ENCODE measurements at regions of chr5 and their contacts with region 1.

Region 1: GRCh38 chr5:174793684-174794328 is 69.4 kb downstream of the MSX2 start:
- DNase-seq: peak; percentile 62 to 83
- H3K4me3 ChIP-seq: no peak overlapping the region
- H3K27ac ChIP-seq: no peak overlapping the region
- H3K4me1 ChIP-seq: peaks cover 0 to 8% (median 6%) of the 10 kb centered on the region in 4 donors
- H3K27me3 ChIP-seq: peaks cover 0 to 57% (median 14%) of the 10 kb centered on the region in 3 donors
- CTCF ChIP-seq: peak in 5 of 7 experiments; percentile 34 to 73 (median 64)
- EP300 ChIP-seq: no peak
- POLR2A ChIP-seq: no peak

Region 2: DNA sequence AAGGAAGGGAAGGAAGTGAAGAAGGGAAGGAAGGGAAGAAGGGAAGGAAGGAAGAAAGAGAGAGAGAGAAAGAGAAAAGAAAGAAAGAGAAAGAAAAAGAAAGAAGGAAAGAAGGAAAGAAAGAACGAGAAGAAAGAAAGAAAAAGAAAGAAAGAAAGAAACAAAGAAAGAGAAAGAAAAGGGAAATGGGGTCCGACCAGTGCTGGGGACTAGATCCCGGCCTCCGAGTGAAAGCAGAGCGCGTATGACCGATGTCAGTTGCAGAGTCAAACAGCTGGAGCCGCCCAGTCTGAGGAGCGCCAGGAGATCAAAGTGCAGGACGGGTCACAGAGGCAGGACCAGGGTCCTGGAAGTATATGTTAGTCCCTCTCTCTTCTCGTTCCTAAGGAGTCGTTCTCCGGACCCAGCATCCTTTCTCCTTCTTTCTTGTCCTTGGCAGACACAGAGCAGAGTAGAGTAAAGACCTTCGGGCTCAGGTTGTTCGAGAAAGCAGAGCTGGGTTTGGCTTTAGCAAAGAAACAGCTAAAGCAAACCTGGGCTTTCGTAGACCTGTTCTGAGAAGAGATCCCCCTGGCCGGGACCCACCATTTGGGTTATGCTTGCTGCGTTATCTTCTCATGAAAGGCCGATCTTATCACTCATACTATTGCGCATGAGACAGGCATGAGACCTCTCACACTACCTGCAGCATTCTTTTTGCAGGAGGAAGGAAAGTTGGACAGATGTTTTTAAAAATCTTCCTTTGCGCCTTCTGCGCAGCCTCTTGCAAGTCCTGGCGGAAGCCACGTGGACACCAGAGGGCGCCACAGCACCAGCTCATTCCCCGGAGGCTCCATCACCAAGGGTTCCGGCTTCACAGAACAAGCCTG is 374.6 kb before region 1 on chr5:
- intact Hi-C with region 1: loop called (anchors 5 kb)
- DNase-seq: peak; percentile 93 to 97
- H3K4me3 ChIP-seq: peak overlapping the region in 1 of 4 donors; percentile 17
- H3K27ac ChIP-seq: no peak overlapping the region
- H3K4me1 ChIP-seq: peaks cover 3 to 11% (median 8%) of the 10 kb centered on the region in 4 donors
- H3K27me3 ChIP-seq: peaks cover 0 to 55% (median 4%) of the 10 kb centered on the region in 3 donors
- CTCF ChIP-seq: peak in 5 of 7 experiments; percentile 43 to 87 (median 80)
- EP300 ChIP-seq: no peak
- POLR2A ChIP-seq: no peak

Region 3: GRCh38 chr5:174693713-174694385 is 100.0 kb before region 1 on chr5:
- intact Hi-C with region 1: no loop called
- DNase-seq: peak; percentile 81
- H3K4me3 ChIP-seq: no peak overlapping the region
- H3K27ac ChIP-seq: no peak overlapping the region
- H3K4me1 ChIP-seq: peaks cover 0 to 24% (median 8%) of the 10 kb centered on the region in 4 donors
- H3K27me3 ChIP-seq: peaks cover 4 to 87% (median 54%) of the 10 kb centered on the region in 3 donors
- CTCF ChIP-seq: no peak
- EP300 ChIP-seq: no peak
- POLR2A ChIP-seq: no peak